Activated CD4-positive, alpha-beta T cell treated with anti-CD3 and anti-CD28 coated beads for 36 hours (primary cell): ENCODE measurements at regions of chr7 and their contacts with region 1.

Region 1: GRCh38 chr7:44999245-45000095 is 531 bp upstream of the CCM2 start:
- DNase-seq: peak; percentile 100
- ATAC-seq: peak; percentile 88
- H3K4me3 Mint-ChIP-seq: peak overlapping the region; percentile 91
- H3K27ac Mint-ChIP-seq: peak overlapping the region; percentile 91
- H3K4me1 Mint-ChIP-seq: peaks cover 56% of the 10 kb centered on the region
- H3K27me3 Mint-ChIP-seq: no peaks in the 10 kb centered on the region

Region 2: GRCh38 chr7:44606450-44607254 is 392.8 kb before region 1 on chr7 and contains the start of gene OGDH:
- CTCF ChIA-PET with region 1: no interaction called
- POLR2A ChIA-PET with region 1: no interaction called
- intact Hi-C with region 1: loop called (anchors 1 kb)
- DNase-seq: peak; percentile 100
- ATAC-seq: peak; percentile 98
- H3K4me3 Mint-ChIP-seq: peak within 1 kb of the TSS; percentile 92
- H3K27ac Mint-ChIP-seq: peak within 1 kb of the TSS; percentile 97
- H3K4me1 Mint-ChIP-seq: peaks cover 33% of the 10 kb centered on the region
- H3K27me3 Mint-ChIP-seq: no peaks in the 10 kb centered on the region
- total RNA-seq, gene OGDH: 80.3 to 90.1 TPM

Region 3: GRCh38 chr7:44740055-44740454 is 259.4 kb before region 1 on chr7:
- CTCF ChIA-PET with region 1: no interaction called
- POLR2A ChIA-PET with region 1: no interaction called
- intact Hi-C with region 1: no loop called
- DNase-seq: no peak
- ATAC-seq: no peak
- H3K4me3 Mint-ChIP-seq: no peak overlapping the region
- H3K27ac Mint-ChIP-seq: no peak overlapping the region
- H3K4me1 Mint-ChIP-seq: peaks cover 12% of the 10 kb centered on the region
- H3K27me3 Mint-ChIP-seq: no peaks in the 10 kb centered on the region

Region 4: GRCh38 chr7:44885394-44886317 is 113.8 kb before region 1 on chr7 and contains the start of gene PURB:
- CTCF ChIA-PET with region 1: no interaction called
- POLR2A ChIA-PET with region 1: interaction called, 5 read pairs
- intact Hi-C with region 1: loop called in 1 of 2 experiments (anchors 1 kb)
- DNase-seq: peak; percentile 98
- ATAC-seq: peak; percentile 97
- H3K4me3 Mint-ChIP-seq: peak within 1 kb of the TSS; percentile 86
- H3K27ac Mint-ChIP-seq: peak within 1 kb of the TSS; percentile 98
- H3K4me1 Mint-ChIP-seq: peaks cover 51% of the 10 kb centered on the region
- H3K27me3 Mint-ChIP-seq: no peaks in the 10 kb centered on the region
- total RNA-seq, gene PURB: 18.8 to 20.8 TPM

Region 5: DNA sequence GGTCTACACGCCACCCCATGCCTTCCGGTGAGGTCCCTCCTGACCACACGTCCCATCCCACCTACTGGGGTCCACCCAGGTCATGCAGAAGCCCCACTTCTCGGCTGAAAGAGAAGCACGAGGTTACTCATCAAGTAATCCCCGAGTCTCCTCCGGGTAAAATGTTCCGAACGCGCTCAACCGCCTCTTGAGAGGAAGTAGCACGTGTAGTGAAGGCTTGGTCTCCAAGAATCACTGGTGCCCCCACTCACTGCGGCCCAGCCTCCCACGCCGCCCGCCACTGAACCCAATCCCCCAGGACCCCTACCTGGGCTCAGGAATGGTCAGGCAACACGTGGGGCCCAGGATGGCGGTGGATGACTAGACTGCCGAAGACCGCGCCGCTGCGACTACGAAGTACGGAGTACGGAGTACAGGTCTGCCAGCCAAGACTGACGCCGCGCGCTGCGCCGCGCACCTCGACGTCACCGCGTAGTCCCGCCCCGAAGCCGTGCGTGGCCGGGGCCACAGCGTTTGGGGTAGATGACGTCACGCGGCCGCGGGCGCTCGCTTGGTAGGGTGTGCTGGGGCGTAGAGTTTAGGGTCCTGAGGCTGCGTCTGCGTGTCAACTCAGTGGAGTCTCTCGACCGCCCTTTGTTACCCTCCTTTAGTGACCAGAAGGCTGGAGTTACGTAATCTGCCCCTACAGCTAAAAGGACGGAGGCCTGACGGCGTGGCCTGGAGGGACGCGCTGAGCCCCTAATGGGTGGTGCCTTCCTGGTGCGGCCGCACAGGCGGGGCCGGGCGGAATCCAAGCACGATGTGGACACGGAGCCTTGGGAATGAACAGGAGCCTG is 13.0 kb before region 1 on chr7:
- CTCF ChIA-PET with region 1: interaction called, 10 read pairs
- POLR2A ChIA-PET with region 1: interaction called, 99 read pairs
- intact Hi-C with region 1: loop called (anchors 1 kb)
- DNase-seq: peak; percentile 99
- ATAC-seq: peak; percentile 90
- H3K4me3 Mint-ChIP-seq: peak overlapping the region; percentile 99
- H3K27ac Mint-ChIP-seq: peak overlapping the region; percentile 99
- H3K4me1 Mint-ChIP-seq: peaks cover 52% of the 10 kb centered on the region
- H3K27me3 Mint-ChIP-seq: no peaks in the 10 kb centered on the region

Region 6: GRCh38 chr7:45111298-45112223 is 112.1 kb after region 1 on chr7 and contains the start of gene TBRG4:
- CTCF ChIA-PET with region 1: interaction called, 8 read pairs
- POLR2A ChIA-PET with region 1: interaction called, 9 read pairs
- intact Hi-C with region 1: loop called (anchors 1 kb)
- DNase-seq: peak; percentile 97
- ATAC-seq: peak; percentile 95
- H3K4me3 Mint-ChIP-seq: peak within 1 kb of the TSS; percentile 94
- H3K27ac Mint-ChIP-seq: peak within 1 kb of the TSS; percentile 96
- H3K4me1 Mint-ChIP-seq: peaks cover 35% of the 10 kb centered on the region
- H3K27me3 Mint-ChIP-seq: peaks cover 2% of the 10 kb centered on the region
- total RNA-seq, gene TBRG4: 158 to 163 TPM